Activated CD8-positive, alpha-beta T cell treated with anti-CD3 and anti-CD28 coated beads for 36 hours (primary cell): ENCODE measurements at regions of chr2 and their contacts with region 1.

Region 1: DNA sequence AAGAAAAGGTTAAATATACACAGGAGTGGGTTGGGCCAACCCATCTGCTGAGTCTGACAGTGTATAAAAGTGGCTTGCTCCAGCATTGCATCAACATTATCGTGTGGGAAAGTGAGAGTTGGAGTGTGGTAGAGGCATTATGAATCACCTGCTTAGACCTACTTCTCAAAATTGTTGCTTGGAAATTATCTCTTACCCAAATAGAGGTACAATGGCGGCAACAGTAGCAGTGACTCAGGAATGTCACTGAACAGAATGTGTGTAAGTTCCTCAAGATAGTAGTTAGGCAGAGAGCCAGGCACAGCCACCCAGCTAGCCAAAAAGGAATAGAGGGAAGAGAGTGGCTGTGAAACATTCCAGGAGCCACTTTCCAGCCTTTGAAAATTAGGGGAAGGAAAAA is 616.0 kb downstream of the NUP35 start:
- DNase-seq: no peak
- ATAC-seq: no peak
- H3K4me3 Mint-ChIP-seq: no peak overlapping the region
- H3K27ac Mint-ChIP-seq: no peak overlapping the region
- H3K4me1 Mint-ChIP-seq: no peaks in the 10 kb centered on the region
- H3K27me3 Mint-ChIP-seq: no peaks in the 10 kb centered on the region
- CTCF ChIP-seq: no peak

Region 2: DNA sequence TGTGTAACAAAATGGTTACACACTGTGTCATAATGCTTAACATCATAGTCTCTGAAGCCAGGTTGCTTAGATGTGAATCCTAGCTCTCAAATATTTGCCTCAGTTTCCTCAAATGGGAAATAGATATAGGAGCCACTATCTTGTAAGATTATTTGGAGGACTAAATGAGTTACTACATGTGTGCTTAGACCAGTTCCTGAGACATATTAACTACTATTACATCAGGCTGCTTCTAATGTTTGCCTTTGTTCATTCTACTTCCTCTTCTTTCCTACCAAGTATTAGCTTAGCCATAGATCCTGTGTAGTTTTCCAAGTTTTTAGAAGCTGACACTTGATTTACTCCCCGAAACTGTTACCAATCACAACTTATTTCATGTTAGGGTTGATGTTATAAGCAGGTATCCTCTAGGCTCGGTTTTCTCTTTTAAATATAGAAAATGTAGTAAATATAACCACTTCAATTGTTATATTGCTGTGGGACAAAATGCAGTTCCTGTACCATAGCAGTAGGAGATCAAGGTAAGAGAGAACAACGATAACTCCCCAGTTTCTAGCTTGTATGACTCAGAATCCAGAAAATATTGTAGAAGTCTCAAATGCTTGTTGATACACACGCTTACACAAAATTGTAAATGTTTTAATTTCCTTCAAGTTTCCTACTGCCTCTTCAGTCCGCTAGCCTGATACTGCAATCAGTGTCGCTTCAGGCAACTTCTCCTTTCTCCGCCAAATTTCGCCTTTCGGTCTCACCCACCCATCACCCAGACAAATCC is 1024.9 kb before region 1 on chr2:
- CTCF ChIA-PET with region 1: no interaction called
- POLR2A ChIA-PET with region 1: no interaction called
- intact Hi-C with region 1: no loop called
- DNase-seq: no peak
- ATAC-seq: peak; percentile 34
- H3K4me3 Mint-ChIP-seq: no peak overlapping the region
- H3K27ac Mint-ChIP-seq: peak overlapping the region; percentile 35
- H3K4me1 Mint-ChIP-seq: peaks cover 12% of the 10 kb centered on the region
- H3K27me3 Mint-ChIP-seq: peaks cover 8% of the 10 kb centered on the region
- CTCF ChIP-seq: peak; percentile 15

Region 3: GRCh38 chr2:183752571-183752970 is 12.3 kb after region 1 on chr2:
- CTCF ChIA-PET with region 1: no interaction called
- POLR2A ChIA-PET with region 1: no interaction called
- intact Hi-C with region 1: loop called (anchors 1 kb)
- DNase-seq: no peak
- ATAC-seq: no peak
- H3K4me3 Mint-ChIP-seq: no peak overlapping the region
- H3K27ac Mint-ChIP-seq: no peak overlapping the region
- H3K4me1 Mint-ChIP-seq: no peaks in the 10 kb centered on the region
- H3K27me3 Mint-ChIP-seq: no peaks in the 10 kb centered on the region
- CTCF ChIP-seq: no peak